ENCODE measurements at regions of chr1 and their contacts with region 1.

Region 1: DNA sequence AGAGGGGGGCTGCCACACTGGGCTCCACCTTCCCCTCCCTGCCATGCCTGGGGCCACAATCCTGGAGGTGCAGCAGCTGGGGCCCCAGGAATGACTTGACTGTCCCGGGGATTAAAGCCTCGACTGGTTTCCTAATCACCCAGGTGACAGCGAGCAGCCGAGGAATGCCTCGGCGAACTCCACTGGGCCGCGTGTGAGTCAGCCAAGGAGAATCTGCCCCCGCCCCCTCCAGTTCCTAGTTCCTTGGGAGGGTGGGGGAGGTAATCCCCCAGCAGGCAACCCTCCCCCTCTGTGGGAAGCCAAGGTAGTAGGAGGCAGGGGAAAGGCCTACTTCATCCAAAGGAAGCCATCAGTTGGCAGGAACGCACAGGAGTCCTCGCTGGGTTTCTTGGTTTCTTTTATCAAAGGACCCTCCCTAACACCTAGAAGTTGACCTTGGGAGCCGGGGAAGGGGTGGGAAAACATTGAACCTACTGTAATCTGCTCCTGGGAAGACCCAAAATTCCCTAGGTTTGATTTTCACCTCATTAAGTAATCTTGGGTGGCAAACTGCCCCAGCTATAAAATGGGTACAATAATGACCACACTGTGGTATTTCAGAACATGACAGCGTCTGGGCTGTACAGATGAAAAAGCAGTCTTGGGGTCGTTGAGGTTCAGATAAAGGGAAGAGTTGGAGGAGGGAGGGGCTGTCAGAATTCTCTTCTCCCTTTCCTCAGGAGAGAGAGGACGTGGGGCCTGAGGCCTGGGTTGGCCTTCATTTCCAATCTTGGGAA is 1.5 kb downstream of the TENT5B start:
- DNase-seq: no peak

Region 2: GRCh38 chr1:26998429-26999300 is 12.5 kb before region 1 on chr1:
- CTCF ChIA-PET with region 1: interaction called, 24 read pairs
- POLR2A ChIA-PET with region 1: interaction called, 4 read pairs
- DNase-seq: no peak

Region 3: GRCh38 chr1:27201295-27201694 is 190.1 kb after region 1 on chr1:
- CTCF ChIA-PET with region 1: no interaction called
- POLR2A ChIA-PET with region 1: no interaction called
- DNase-seq: no peak